CD4-positive, alpha-beta T cell (primary cell): ENCODE measurements at regions of chr14 and their contacts with region 1.

Region 1: GRCh38 chr14:24431569-24432258 is 2.0 kb downstream of the KHNYN start:
- DNase-seq: peak; percentile 78 to 96 (median 86)
- ATAC-seq: peak; percentile 53
- H3K4me3 ChIP-seq: peak overlapping the region; percentile 80
- H3K4me3 Mint-ChIP-seq: peak overlapping the region; percentile 92
- H3K27ac ChIP-seq: peak overlapping the region; percentile 92 to 94
- H3K27ac Mint-ChIP-seq: peak overlapping the region; percentile 97
- H3K4me1 ChIP-seq: peaks cover 63% of the 10 kb centered on the region
- H3K4me1 Mint-ChIP-seq: peaks cover 64% of the 10 kb centered on the region
- H3K27me3 ChIP-seq: no peaks in the 10 kb centered on the region
- H3K27me3 Mint-ChIP-seq: no peaks in the 10 kb centered on the region
- CTCF ChIP-seq: peak; percentile 89

Region 2: GRCh38 chr14:24013654-24014514 is 417.8 kb before region 1 on chr14:
- CTCF ChIA-PET with region 1: no interaction called
- POLR2A ChIA-PET with region 1: no interaction called
- intact Hi-C with region 1: loop called in 1 of 2 experiments (anchors 2 kb)
- DNase-seq: peak in 12 of 14 experiments; percentile 9 to 85 (median 32)
- ATAC-seq: peak; percentile 98
- H3K4me3 ChIP-seq: no peak overlapping the region
- H3K4me3 Mint-ChIP-seq: no peak overlapping the region
- H3K27ac ChIP-seq: no peak overlapping the region
- H3K27ac Mint-ChIP-seq: no peak overlapping the region
- H3K4me1 ChIP-seq: peaks cover 11% of the 10 kb centered on the region
- H3K4me1 Mint-ChIP-seq: peaks cover 25% of the 10 kb centered on the region
- H3K27me3 ChIP-seq: no peaks in the 10 kb centered on the region
- H3K27me3 Mint-ChIP-seq: no peaks in the 10 kb centered on the region
- CTCF ChIP-seq: peak; percentile 92

Region 3: GRCh38 chr14:24271134-24271833 is 160.4 kb before region 1 on chr14 and contains the start of gene RABGGTA:
- CTCF ChIA-PET with region 1: interaction called, 11 read pairs
- POLR2A ChIA-PET with region 1: interaction called, 22 read pairs
- intact Hi-C with region 1: no loop called
- DNase-seq: peak; percentile 84 to 99 (median 92)
- ATAC-seq: peak; percentile 83
- H3K4me3 ChIP-seq: peak within 1 kb of the TSS; percentile 86
- H3K4me3 Mint-ChIP-seq: peak within 1 kb of the TSS; percentile 96
- H3K27ac ChIP-seq: peak within 1 kb of the TSS; percentile 92 to 95
- H3K27ac Mint-ChIP-seq: peak within 1 kb of the TSS; percentile 97
- H3K4me1 ChIP-seq: peaks cover 43% of the 10 kb centered on the region
- H3K4me1 Mint-ChIP-seq: peaks cover 40% of the 10 kb centered on the region
- H3K27me3 ChIP-seq: no peaks in the 10 kb centered on the region
- H3K27me3 Mint-ChIP-seq: no peaks in the 10 kb centered on the region
- CTCF ChIP-seq: peak; percentile 75
- total RNA-seq, gene RABGGTA: 52.3 to 55.2 TPM

Region 4: DNA sequence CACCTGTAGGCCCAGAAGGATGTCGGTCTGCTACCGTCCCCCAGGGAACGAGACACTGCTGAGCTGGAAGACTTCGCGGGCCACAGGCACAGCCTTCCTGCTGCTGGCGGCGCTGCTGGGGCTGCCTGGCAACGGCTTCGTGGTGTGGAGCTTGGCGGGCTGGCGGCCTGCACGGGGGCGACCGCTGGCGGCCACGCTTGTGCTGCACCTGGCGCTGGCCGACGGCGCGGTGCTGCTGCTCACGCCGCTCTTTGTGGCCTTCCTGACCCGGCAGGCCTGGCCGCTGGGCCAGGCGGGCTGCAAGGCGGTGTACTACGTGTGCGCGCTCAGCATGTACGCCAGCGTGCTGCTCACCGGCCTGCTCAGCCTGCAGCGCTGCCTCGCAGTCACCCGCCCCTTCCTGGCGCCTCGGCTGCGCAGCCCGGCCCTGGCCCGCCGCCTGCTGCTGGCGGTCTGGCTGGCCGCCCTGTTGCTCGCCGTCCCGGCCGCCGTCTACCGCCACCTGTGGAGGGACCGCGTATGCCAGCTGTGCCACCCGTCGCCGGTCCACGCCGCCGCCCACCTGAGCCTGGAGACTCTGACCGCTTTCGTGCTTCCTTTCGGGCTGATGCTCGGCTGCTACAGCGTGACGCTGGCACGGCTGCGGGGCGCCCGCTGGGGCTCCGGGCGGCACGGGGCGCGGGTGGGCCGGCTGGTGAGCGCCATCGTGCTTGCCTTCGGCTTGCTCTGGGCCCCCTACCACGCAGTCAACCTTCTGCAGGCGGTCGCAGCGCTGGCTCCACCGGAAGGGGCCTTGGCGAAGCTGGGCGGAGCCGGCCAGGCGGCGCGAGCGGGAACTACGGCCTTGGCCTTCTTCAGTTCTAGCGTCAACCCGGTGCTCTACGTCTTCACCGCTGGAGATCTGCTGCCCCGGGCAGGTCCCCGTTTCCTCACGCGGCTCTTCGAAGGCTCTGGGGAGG is 120.8 kb before region 1 on chr14 and contains the start of gene LTB4R:
- CTCF ChIA-PET with region 1: interaction called, 14 read pairs
- POLR2A ChIA-PET with region 1: interaction called, 26 read pairs
- intact Hi-C with region 1: no loop called
- DNase-seq: peak; percentile 47 to 91 (median 61)
- ATAC-seq: peak; percentile 81
- H3K4me3 ChIP-seq: peak within 1 kb of the TSS; percentile 65
- H3K4me3 Mint-ChIP-seq: peak within 1 kb of the TSS; percentile 88
- H3K27ac ChIP-seq: peak within 1 kb of the TSS; percentile 59 to 73
- H3K27ac Mint-ChIP-seq: peak within 1 kb of the TSS; percentile 76
- H3K4me1 ChIP-seq: peaks cover 80% of the 10 kb centered on the region
- H3K4me1 Mint-ChIP-seq: peaks cover 80% of the 10 kb centered on the region
- H3K27me3 ChIP-seq: no peaks in the 10 kb centered on the region
- H3K27me3 Mint-ChIP-seq: no peaks in the 10 kb centered on the region
- CTCF ChIP-seq: peak; percentile 45
- total RNA-seq, gene LTB4R: 15.6 to 18.3 TPM

Region 5: GRCh38 chr14:24366721-24367513 is 64.8 kb before region 1 on chr14:
- CTCF ChIA-PET with region 1: interaction called, 25 read pairs
- POLR2A ChIA-PET with region 1: interaction called, 14 read pairs
- intact Hi-C with region 1: loop called (anchors 1 to 2 kb)
- DNase-seq: peak in 4 of 14 experiments; percentile 5 to 50 (median 16)
- ATAC-seq: peak; percentile 38
- H3K4me3 ChIP-seq: peak overlapping the region; percentile 31
- H3K4me3 Mint-ChIP-seq: peak overlapping the region; percentile 76
- H3K27ac ChIP-seq: no peak overlapping the region
- H3K27ac Mint-ChIP-seq: no peak overlapping the region
- H3K4me1 ChIP-seq: peaks cover 39% of the 10 kb centered on the region
- H3K4me1 Mint-ChIP-seq: peaks cover 30% of the 10 kb centered on the region
- H3K27me3 ChIP-seq: peaks cover 49 to 67% of the 10 kb centered on the region in 2 experiments
- H3K27me3 Mint-ChIP-seq: peaks cover 65% of the 10 kb centered on the region
- CTCF ChIP-seq: no peak

Region 6: DNA sequence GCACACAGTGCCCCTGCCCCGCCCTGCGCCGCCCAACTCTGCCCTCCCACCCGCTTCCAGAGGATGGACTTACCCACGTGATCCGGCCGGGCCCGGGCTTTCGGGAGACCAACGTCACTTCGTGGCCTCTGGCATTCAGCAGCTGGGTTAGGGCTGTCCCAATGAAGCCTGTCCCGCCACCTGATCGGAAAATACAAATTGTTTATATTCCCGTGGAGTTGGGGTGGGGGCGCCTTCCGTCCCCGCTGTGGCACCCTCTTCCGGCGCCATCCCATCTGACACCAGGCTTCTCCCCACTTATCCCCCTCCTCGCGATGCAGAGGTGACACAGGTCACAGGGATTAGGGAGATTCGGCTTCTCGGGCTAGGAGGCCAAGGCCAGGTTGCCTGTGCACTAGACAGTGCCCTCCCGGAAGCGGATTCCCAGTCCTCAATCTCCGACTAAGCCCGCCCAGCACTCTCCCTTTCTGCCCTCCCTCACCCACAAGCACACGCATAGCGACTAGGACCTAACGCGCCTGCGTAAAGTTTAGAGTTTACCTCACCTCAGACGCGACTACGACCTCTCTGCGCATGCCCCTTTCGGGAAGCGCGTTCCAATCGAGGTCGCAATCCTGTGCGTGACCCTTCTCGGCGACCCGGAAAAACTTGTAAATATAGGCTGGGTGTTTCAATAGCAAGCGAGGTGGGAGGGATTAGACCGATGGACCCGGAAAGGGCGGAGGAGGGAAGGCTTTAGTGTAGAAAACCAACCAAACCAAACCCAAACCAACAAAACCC is 10.7 kb after region 1 on chr14 and contains the start of gene SDR39U1:
- CTCF ChIA-PET with region 1: interaction called, 21 read pairs
- POLR2A ChIA-PET with region 1: interaction called, 116 read pairs
- intact Hi-C with region 1: loop called (anchors 1 kb)
- DNase-seq: peak; percentile 90 to 100 (median 96)
- ATAC-seq: peak; percentile 86
- H3K4me3 ChIP-seq: peak within 1 kb of the TSS; percentile 88
- H3K4me3 Mint-ChIP-seq: peak within 1 kb of the TSS; percentile 88
- H3K27ac ChIP-seq: peak within 1 kb of the TSS; percentile 93 to 99
- H3K27ac Mint-ChIP-seq: peak within 1 kb of the TSS; percentile 90
- H3K4me1 ChIP-seq: peaks cover 32% of the 10 kb centered on the region
- H3K4me1 Mint-ChIP-seq: peaks cover 53% of the 10 kb centered on the region
- H3K27me3 ChIP-seq: no peaks in the 10 kb centered on the region
- H3K27me3 Mint-ChIP-seq: no peaks in the 10 kb centered on the region
- CTCF ChIP-seq: no peak
- total RNA-seq, gene SDR39U1: 71.7 to 74.7 TPM